CD4-positive, alpha-beta memory T cell (primary cell): ENCODE measurements at regions of chr3 and their contacts with region 1.

Region 1: GRCh38 chr3:49093853-49094767 is at the start of gene QRICH1:
- DNase-seq: peak; percentile 97 to 99 (median 98)
- H3K4me3 ChIP-seq: peak within 1 kb of the TSS; percentile 84 to 90
- H3K4me3 Mint-ChIP-seq: peak within 1 kb of the TSS; percentile 92 to 96 (median 96)
- H3K27ac ChIP-seq: peak within 1 kb of the TSS; percentile 87
- H3K27ac Mint-ChIP-seq: peak within 1 kb of the TSS; percentile 94 to 99 (median 97)
- H3K4me1 ChIP-seq: peaks cover 46% of the 10 kb centered on the region
- H3K4me1 Mint-ChIP-seq: peaks cover 21 to 49% (median 35%) of the 10 kb centered on the region in 4 donors
- H3K27me3 ChIP-seq: no peaks in the 10 kb centered on the region
- H3K27me3 Mint-ChIP-seq: no peaks in the 10 kb centered on the region
- total RNA-seq, gene QRICH1: 172 to 177 TPM

Region 2: GRCh38 chr3:48847504-48848423 is 246.3 kb before region 1 on chr3 and contains the start of gene PRKAR2A:
- CTCF ChIA-PET with region 1: no interaction called
- POLR2A ChIA-PET with region 1: interaction called, 11 read pairs
- intact Hi-C with region 1: no loop called
- DNase-seq: peak; percentile 69 to 82 (median 76)
- H3K4me3 ChIP-seq: peak within 1 kb of the TSS; percentile 69 to 89
- H3K4me3 Mint-ChIP-seq: peak within 1 kb of the TSS; percentile 85 to 91 (median 89)
- H3K27ac ChIP-seq: peak within 1 kb of the TSS; percentile 74
- H3K27ac Mint-ChIP-seq: peak within 1 kb of the TSS; percentile 94 to 98 (median 97)
- H3K4me1 ChIP-seq: peaks cover 33% of the 10 kb centered on the region
- H3K4me1 Mint-ChIP-seq: peaks cover 19 to 39% (median 29%) of the 10 kb centered on the region in 4 donors
- H3K27me3 ChIP-seq: no peaks in the 10 kb centered on the region
- H3K27me3 Mint-ChIP-seq: no peaks in the 10 kb centered on the region
- total RNA-seq, gene PRKAR2A: 41.7 to 45.0 TPM

Region 3: GRCh38 chr3:49007068-49007770 is 86.9 kb before region 1 on chr3 and contains the start of gene WDR6:
- CTCF ChIA-PET with region 1: interaction called, 15 read pairs
- POLR2A ChIA-PET with region 1: interaction called, 69 read pairs
- intact Hi-C with region 1: loop called (anchors 1 kb)
- DNase-seq: peak; percentile 95 to 98 (median 97)
- H3K4me3 ChIP-seq: peak within 1 kb of the TSS; percentile 81 to 97
- H3K4me3 Mint-ChIP-seq: peak within 1 kb of the TSS; percentile 93 to 99 (median 98)
- H3K27ac ChIP-seq: peak within 1 kb of the TSS; percentile 87
- H3K27ac Mint-ChIP-seq: peak within 1 kb of the TSS; percentile 95 to 100 (median 99)
- H3K4me1 ChIP-seq: peaks cover 20% of the 10 kb centered on the region
- H3K4me1 Mint-ChIP-seq: peaks cover 15 to 37% (median 24%) of the 10 kb centered on the region in 4 donors
- H3K27me3 ChIP-seq: no peaks in the 10 kb centered on the region
- H3K27me3 Mint-ChIP-seq: no peaks in the 10 kb centered on the region
- total RNA-seq, gene WDR6: 287 to 295 TPM

Region 4: GRCh38 chr3:49079270-49079669 is 14.8 kb before region 1 on chr3:
- CTCF ChIA-PET with region 1: interaction called, 3 read pairs
- POLR2A ChIA-PET with region 1: interaction called, 14 read pairs
- intact Hi-C with region 1: no loop called
- DNase-seq: no peak
- H3K4me3 ChIP-seq: no peak overlapping the region
- H3K4me3 Mint-ChIP-seq: no peak overlapping the region
- H3K27ac ChIP-seq: no peak overlapping the region
- H3K27ac Mint-ChIP-seq: no peak overlapping the region
- H3K4me1 ChIP-seq: peaks cover 21% of the 10 kb centered on the region
- H3K4me1 Mint-ChIP-seq: peaks cover 8 to 18% (median 15%) of the 10 kb centered on the region in 4 donors
- H3K27me3 ChIP-seq: no peaks in the 10 kb centered on the region
- H3K27me3 Mint-ChIP-seq: no peaks in the 10 kb centered on the region

Region 5: DNA sequence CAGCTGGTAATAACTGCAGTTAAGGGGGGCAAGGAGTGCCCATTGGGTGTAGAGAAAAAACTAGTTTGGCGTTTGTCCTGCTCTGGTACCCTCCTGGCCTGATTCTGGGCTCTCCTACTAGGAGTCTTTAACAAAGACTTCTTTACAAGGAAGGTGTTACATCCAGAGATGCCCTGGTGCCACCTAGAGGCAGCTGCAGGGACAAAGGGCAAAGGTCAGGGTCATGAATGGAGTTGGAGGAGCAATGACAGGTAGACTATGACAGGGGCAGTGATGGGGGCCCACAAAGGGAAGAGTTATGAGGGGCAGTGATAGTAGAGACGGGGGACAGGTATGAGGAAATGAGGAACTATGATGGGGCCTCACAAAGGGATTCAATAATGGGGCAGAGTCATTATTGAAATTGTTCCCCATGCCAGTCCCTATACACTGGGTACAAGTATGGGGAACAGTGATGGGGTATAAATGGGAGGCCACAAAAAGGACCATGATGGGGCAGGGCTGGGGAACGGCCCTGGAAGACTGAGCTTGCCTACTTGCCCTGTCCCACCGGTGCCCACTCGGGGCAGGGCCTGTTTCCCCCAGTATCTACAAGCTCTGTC is 64.1 kb after region 1 on chr3:
- CTCF ChIA-PET with region 1: interaction called, 8 read pairs
- POLR2A ChIA-PET with region 1: interaction called, 6 read pairs
- intact Hi-C with region 1: loop called (anchors 1 kb)
- DNase-seq: peak; percentile 54 to 77 (median 63)
- H3K4me3 ChIP-seq: no peak overlapping the region
- H3K4me3 Mint-ChIP-seq: no peak overlapping the region
- H3K27ac ChIP-seq: no peak overlapping the region
- H3K27ac Mint-ChIP-seq: peak overlapping the region; percentile 8 to 91 (median 64)
- H3K4me1 ChIP-seq: no peaks in the 10 kb centered on the region
- H3K4me1 Mint-ChIP-seq: peaks cover 2 to 11% (median 5%) of the 10 kb centered on the region in 4 donors
- H3K27me3 ChIP-seq: no peaks in the 10 kb centered on the region
- H3K27me3 Mint-ChIP-seq: no peaks in the 10 kb centered on the region

Region 6: GRCh38 chr3:49387721-49388120 is 293.6 kb after region 1 on chr3:
- CTCF ChIA-PET with region 1: no interaction called
- POLR2A ChIA-PET with region 1: no interaction called
- intact Hi-C with region 1: no loop called
- DNase-seq: no peak
- H3K4me3 ChIP-seq: no peak overlapping the region
- H3K4me3 Mint-ChIP-seq: peak overlapping the region in 3 of 8 donors; percentile 12 to 63 (median 26)
- H3K27ac ChIP-seq: no peak overlapping the region
- H3K27ac Mint-ChIP-seq: peak overlapping the region in 5 of 7 donors; percentile 37 to 77 (median 64)
- H3K4me1 ChIP-seq: peaks cover 84% of the 10 kb centered on the region
- H3K4me1 Mint-ChIP-seq: peaks cover 38 to 82% (median 57%) of the 10 kb centered on the region in 4 donors
- H3K27me3 ChIP-seq: no peaks in the 10 kb centered on the region
- H3K27me3 Mint-ChIP-seq: no peaks in the 10 kb centered on the region

Region 7: DNA sequence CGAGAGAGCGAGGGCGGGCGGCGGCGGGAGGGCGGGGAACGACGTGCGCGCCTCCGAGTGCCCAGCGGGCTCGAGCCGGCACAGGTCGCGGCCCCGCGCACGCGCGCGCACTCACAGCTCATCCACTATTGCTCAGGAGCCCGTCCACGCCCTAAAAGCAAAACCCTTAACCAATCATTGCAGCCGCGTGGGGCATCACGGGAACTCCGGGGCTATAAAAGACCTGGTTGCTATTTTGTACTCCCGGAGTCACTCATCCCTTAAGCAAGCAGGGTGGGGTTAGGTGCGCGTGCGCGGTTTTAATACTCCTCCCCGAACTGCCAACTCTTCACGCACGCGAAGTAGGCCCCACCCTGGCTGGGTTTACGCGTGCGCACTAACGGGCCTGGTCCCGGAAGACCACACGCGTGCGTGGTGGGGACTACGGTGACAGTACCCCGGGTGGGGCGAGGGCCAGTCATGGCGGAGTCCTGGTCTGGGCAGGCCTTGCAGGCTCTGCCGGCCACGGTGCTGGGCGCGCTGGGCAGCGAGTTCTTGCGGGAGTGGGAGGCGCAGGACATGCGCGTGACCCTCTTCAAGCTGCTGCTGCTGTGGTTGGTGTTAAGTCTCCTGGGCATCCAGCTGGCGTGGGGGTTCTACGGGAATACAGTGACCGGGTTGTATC is 318.0 kb after region 1 on chr3 and contains the starts of genes RHOA and TCTA:
- CTCF ChIA-PET with region 1: no interaction called
- POLR2A ChIA-PET with region 1: interaction called, 23 read pairs
- intact Hi-C with region 1: loop called (anchors 2 kb)
- DNase-seq: peak; percentile 97 to 100 (median 100)
- H3K4me3 ChIP-seq: peak within 1 kb of the TSS; percentile 78 to 89
- H3K4me3 Mint-ChIP-seq: peak within 1 kb of the TSS; percentile 91 to 98 (median 94)
- H3K27ac ChIP-seq: peak within 1 kb of the TSS; percentile 93
- H3K27ac Mint-ChIP-seq: peak within 1 kb of the TSS; percentile 95 to 99 (median 97)
- H3K4me1 ChIP-seq: peaks cover 81% of the 10 kb centered on the region
- H3K4me1 Mint-ChIP-seq: peaks cover 51 to 82% (median 63%) of the 10 kb centered on the region in 4 donors
- H3K27me3 ChIP-seq: no peaks in the 10 kb centered on the region
- H3K27me3 Mint-ChIP-seq: no peaks in the 10 kb centered on the region
- total RNA-seq, gene RHOA: 246 to 269 TPM
- total RNA-seq, gene TCTA: 38.0 to 39.0 TPM

Region 8: DNA sequence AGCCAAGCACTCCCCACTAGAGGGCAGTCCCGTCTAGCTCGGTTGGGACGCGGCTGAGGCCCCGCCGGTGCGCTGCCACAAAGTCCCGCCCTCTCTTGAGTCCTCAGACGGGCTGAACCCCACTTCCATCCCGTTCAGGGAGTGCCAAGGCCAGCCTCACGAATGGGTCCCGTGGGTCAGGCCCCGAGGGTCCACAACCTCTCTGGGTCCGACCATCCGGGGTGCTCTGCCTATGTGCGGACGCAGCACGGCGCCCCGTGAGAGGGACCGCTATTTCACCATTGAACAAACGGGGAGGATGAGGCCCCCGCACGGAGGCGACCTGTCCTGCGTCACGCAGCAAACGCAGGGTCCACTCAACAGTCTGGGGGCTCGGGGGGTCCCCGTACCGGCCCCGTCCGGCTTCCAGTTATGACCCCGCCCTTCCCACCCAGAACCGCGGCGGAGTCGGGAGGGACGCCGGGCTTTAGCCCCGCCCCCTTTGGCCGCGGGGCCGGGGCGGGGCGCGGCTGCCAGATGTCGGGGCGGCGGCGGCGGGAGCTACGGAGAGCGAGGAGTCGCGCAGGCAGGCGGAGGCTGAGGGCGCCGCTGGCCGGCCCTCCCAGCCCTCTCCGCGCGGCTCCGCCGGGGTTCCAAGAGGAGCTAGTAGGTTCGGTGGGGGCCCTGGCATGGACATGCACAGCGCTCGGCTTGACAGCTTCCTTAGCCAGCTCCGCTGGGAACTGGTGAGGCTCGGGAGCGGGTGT is 708.8 kb after region 1 on chr3 and contains the start of gene INKA1:
- CTCF ChIA-PET with region 1: no interaction called
- POLR2A ChIA-PET with region 1: no interaction called
- intact Hi-C with region 1: no loop called
- DNase-seq: peak; percentile 86 to 88 (median 88)
- H3K4me3 ChIP-seq: peak within 1 kb of the TSS; percentile 74 to 84
- H3K4me3 Mint-ChIP-seq: peak within 1 kb of the TSS; percentile 89 to 94 (median 92)
- H3K27ac ChIP-seq: peak within 1 kb of the TSS; percentile 78
- H3K27ac Mint-ChIP-seq: peak within 1 kb of the TSS; percentile 87 to 98 (median 95)
- H3K4me1 ChIP-seq: peaks cover 32% of the 10 kb centered on the region
- H3K4me1 Mint-ChIP-seq: peaks cover 18 to 50% (median 33%) of the 10 kb centered on the region in 4 donors
- H3K27me3 ChIP-seq: no peaks in the 10 kb centered on the region
- H3K27me3 Mint-ChIP-seq: peaks cover 0 to 4% of the 10 kb centered on the region in 2 donors
- total RNA-seq, gene INKA1: 0.55 to 1.2 TPM